Tibial artery (tissue), 4 donors: ENCODE measurements at regions of chr11 and their contacts with region 1.

Region 1: DNA sequence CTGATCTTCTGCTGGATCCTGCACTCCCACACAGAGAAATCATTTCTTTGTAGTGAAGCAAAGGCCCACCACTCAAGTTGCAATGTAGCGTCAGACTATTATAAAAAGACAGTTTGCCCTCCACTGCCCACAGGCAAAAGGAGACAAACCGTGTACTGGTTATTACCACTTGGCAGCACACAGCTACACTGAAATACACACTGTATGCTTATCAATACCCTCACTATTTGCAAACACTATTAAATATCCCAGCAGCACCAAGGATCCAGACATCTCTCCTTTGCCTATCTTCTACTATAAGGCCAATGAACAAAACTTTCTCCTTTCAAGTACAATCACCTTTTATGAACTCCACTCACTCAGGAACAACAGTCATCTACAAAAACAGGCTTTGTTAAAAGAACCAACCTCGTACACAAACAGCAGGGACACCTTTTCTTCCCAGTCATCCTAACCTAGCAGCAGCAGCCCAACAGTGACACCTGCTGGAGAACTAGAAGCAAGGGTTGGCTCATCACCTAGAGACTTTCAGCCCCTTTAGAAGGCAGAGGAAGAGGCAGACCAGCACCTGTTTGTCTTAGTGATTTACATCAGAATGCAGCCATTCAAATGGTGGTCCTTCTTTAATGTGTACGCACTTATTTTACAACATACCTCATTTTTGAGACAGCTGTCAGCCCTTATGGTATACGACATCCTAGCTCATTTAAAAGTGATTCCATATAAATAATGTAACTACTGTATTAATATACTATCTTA is 56.1 kb downstream of the AMBRA1 start:
- DNase-seq: no peak
- H3K4me3 ChIP-seq: no peak overlapping the region
- H3K27ac ChIP-seq: no peak overlapping the region
- H3K4me1 ChIP-seq: peaks cover 0 to 14% (median 5%) of the 10 kb centered on the region in 4 donors
- H3K27me3 ChIP-seq: no peaks in the 10 kb centered on the region
- CTCF ChIP-seq: peak; percentile 68 to 86

Region 2: DNA sequence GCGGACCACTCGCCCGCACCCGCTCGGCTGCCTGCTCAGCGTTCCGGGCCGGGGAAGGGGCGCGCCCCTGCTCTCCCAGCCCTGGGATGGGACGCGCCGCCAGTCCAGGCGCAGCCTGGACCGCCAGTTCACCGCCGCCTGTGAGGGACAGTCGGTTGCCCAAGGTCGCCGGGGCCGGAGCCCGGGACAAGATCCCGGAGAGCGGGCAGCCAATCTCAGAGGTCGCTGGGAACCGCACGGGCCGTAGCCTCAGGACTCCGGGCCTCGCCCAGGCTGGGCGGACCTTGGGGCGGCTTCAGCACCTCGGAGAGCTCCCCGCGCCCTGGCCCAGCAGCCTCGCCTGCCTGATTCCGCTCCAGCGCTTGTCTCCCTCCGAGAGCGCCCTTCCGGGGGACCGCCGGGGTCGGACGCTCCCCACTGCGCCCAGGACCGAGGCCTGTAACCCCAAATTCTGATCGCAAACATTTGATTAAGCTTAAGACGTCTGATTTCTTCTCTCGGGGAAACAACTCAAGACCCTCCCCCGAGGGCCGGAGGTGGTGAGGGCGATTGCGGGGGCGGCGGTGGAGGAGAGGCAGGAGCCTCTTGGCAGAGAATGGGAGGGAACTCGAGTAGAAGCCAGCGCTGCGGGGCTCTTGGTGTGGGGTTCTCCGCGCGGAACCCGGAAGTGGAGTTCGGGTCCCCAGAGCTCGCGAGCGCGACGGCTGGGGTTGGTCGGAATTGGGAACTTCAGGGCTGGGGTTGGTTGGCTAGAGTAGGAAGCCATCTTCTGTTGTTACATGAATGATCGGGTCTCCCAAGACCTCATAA is 145.1 kb before region 1 on chr11:
- intact Hi-C with region 1: loop called (anchors 10 kb)
- DNase-seq: peak; percentile 75 to 86
- H3K4me3 ChIP-seq: peak overlapping the region; percentile 9 to 30
- H3K27ac ChIP-seq: no peak overlapping the region
- H3K4me1 ChIP-seq: peaks cover 7 to 43% (median 35%) of the 10 kb centered on the region in 4 donors
- H3K27me3 ChIP-seq: peaks cover 3 to 48% of the 10 kb centered on the region in 2 donors
- CTCF ChIP-seq: no peak